ENCODE measurements at regions of chr12 and their contacts with region 1.

Region 1: DNA sequence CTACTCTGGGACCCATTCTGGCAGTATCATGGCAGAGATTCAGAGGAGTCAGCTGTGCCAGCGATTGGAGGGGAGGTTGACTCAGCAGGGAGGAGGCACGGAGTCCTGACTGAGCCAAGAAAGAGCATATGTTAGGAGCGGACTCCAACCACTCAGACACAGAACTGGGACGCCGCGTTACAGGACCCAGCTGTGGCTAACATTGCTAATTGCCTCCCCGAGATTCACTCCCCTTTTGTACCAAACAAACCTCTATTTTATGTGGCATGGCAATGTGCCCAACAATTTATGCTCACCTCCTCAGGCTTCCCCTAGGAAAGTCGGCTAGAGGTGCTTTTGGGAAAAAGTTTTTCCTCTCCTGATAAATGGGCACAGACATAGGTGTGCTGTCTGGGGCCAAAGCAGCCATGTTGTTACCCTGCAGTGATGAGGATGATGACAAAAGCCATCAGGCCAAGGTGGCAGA is 15.2 kb upstream of the CLIP1 start:
- DNase-seq: peak; percentile 75

Region 2: GRCh38 chr12:122382919-122383350 is 54.8 kb before region 1 on chr12:
- in situ Hi-C with region 1: loop called (anchors 5 kb)
- DNase-seq: no peak